Motor neuron (in vitro differentiated cells): ENCODE measurements at regions of chr4 and their contacts with region 1.

Region 1: DNA sequence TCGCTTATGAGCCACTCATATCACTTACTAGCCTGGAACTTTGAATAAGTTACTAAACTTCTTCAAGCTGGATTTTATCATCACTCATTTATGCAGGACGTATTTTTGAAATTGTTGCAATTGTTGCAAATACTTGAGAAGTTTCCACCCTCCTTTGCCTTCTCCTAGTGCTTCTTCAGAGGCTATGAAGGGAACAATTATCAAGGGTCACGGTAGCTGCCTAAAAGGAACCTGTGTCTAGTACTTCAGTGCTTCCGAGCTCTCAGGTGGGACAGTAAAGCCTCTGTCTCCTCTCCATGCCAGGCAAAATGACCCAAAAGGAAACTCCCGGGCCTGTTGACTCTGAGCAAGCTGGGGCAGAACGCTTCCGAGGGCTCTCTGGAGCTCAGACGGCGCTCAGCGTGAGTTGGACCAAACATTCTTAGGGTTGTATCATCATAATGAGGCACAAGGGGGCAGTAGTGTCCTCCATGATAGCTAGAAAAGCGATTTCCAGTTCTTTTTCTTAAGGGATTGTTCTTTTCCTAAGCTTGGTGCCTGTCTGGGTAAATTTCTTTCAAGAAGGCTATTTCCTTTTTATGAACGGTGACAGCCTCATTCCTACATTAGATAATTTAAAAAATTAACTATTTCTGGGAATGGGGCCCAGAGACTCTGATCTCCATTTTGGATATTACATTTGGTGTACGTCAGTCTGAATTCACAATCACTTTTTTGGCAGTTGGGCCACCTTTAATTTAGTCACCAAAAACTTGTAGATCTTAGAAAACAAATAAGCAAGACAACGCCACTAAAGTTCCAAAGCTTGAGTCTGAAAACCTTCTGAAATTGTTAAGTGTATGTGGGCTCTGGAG is 73.1 kb downstream of the PACRGL start:
- ATAC-seq: peak; percentile 42 to 85 (median 64)
- H3K4me3 ChIP-seq: no peak overlapping the region
- H3K27ac ChIP-seq: no peak overlapping the region
- H3K4me1 ChIP-seq: no peaks in the 10 kb centered on the region

Region 2: GRCh38 chr4:21134994-21135393 is 361.6 kb after region 1 on chr4:
- in situ Hi-C with region 1: loop called in 2 of 9 experiments (anchors 10 to 25 kb)
- ATAC-seq: peak in 4 of 8 experiments; percentile 66 to 81 (median 72)
- H3K4me3 ChIP-seq: no peak overlapping the region
- H3K27ac ChIP-seq: no peak overlapping the region
- H3K4me1 ChIP-seq: no peaks in the 10 kb centered on the region

Region 3: DNA sequence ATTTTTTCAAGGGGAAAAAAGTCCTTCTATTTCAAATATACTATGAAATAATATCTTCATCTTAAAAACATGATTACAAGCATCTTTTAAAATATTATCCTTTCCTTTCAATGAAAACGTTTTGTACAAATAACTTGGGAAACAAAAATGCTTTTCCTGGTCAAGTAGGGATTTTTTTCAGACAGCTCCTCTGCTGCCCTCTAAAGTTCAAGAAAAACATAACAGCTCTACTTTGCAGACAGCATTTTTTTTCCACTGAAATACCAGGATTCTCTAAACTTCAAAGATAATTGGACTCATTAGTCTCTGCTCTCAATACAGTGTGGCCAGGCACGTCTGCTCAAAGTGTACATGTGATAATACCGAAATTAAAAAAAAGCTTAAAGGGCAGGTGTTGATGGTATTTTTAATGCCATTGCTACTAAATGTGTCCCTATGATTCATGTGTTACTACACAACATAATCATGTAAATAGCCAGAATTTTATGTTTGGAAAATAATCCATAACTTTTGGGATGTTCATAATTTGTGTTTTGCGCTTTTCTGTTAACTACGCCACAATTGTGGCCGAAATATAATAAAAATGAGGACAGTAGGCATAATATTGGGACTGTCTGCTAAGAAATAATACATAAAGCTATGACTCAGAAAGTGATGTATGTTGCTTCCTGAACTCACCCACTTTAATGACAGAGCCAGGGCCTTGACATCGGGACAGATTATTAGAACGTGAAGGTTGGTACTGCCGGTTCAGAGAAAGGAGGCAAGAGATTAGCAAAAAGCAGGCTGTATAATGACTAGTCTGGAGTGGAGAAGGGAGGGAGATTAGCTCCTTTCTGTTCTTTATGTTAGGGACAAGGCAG is 696.3 kb after region 1 on chr4:
- in situ Hi-C with region 1: loop called in 6 of 9 experiments (anchors 10 to 25 kb)
- ATAC-seq: peak in 5 of 8 experiments; percentile 58 to 81 (median 73)
- H3K4me3 ChIP-seq: no peak overlapping the region
- H3K27ac ChIP-seq: no peak overlapping the region
- H3K4me1 ChIP-seq: no peaks in the 10 kb centered on the region